ENCODE measurements at regions of chr10 and their contacts with region 1.

Region 1: DNA sequence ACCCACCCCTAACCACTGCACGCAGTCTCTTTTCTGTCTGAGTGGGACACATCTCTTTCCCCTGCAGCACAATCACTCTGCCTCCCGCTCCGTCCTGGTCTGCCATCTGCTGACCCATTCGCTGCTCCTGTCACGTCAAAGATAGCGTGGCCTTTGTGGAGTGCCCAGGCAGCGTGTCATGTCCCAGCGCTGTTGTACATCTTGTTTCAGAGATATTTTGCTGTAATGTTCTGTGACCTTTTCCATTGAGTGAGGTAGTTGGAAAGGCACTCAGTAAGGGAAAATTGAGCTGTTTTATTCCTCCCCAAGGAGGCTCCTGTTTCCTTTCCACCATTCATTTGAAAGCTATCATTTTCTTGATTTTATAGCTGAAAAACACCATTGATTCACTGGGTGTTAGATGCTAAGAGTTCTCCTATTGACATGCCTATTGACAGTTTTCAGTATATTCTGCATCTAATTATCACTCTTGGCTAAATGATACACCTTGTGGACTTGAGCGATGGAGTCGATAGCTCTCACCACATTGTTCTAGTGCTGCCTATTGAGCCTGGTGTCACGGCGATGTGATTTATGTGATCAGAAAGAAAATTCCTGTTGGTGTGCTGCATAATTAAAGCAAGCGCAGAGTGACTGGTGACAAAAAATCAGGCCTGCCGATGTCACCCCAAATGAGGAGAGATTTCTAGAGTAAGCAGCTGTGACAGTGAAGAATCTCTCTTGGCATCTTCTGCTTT is 372.6 kb downstream of the LRMDA start:
- DNase-seq: no peak
- H3K27ac ChIP-seq: no peak overlapping the region
- CTCF ChIP-seq: no peak

Region 2: GRCh38 chr10:75922435-75922834 is 118.5 kb after region 1 on chr10:
- CTCF ChIA-PET with region 1: interaction called, 12 read pairs
- POLR2A ChIA-PET with region 1: no interaction called
- DNase-seq: no peak
- H3K27ac ChIP-seq: no peak overlapping the region
- CTCF ChIP-seq: no peak

Measured in RWPE1 (cell line).